ENCODE measurements at regions of chr16 and their contacts with region 1.

Region 1: DNA sequence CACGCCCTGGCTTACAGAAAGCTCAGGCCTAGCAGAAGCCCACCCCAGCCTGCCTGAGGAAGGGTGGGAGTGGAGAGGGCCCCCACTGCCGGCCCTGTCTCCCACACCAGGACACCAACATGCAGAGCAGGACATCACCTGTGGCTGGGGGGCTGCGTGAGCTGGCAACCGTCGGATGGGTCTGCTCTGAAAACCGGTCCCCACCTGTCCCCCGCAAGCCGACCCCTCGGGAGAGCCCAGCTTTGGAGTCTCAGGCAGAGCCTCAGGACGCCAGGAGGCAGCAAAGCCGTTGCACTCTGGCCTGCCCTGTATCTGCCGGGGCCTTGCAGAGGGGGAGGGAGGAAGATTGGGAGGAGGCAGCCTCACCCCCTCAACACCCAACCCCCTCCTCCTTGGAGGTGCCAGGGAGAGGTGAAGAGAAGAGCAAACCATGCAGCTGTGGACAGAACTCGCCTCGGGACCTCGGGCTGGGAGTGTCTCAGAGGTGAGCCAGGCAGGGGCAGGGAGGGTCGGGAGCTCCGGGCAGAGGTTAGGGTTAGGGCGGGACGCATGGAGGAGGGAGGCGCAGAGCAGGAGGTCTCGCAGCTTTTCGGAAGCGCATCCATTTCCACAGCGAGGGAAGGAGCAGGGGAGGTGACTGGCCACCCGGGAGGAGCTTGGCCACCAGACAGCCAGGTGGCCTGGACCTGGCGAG is 30.4 kb upstream of the ZC3H18 start:
- DNase-seq: no peak
- H3K4me3 Mint-ChIP-seq: no peak overlapping the region
- H3K27ac Mint-ChIP-seq: no peak overlapping the region
- H3K4me1 Mint-ChIP-seq: peaks cover 8% of the 10 kb centered on the region
- H3K27me3 Mint-ChIP-seq: peaks cover 4% of the 10 kb centered on the region

Region 2: DNA sequence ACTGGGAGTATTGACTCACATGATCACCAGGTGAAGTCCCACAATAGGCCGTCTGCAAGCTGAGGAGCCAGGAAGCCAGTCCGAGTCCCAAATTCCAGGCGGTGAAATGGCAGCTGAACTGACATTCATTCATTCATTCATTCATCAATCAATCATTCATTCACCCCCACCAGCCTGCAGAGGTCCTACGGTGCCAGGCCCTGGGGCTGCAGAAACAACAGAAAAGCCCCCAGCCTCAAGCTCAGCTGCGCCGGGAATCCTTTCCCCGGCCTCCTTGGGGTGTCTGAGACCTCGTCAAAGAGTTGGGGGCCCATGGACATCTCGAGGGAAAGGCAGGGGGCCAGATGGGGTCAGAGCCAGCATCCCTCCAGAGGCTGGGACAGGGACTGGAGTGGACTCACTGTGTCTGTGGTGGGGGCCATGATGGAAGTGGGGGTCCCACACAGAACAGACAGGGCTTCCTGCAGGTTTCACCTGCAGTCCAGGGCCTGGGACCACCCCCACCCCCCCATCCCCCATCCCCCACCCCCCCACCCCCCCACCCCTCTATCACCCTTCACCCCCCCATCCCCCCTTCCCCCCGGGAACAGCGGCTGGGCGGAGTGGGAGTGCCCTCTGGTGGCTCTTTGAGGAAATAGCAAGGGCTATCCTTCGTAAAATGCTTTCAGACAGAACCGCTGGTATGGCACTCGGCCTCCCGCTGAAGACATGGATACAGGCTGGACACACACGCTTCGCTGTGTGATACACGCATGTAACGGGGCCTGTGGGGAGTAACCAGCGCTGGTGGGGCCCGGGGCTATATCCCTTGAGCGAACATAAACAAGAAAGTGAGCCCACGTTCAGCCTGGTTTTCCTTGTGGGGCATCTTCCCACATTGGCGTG is 21.9 kb after region 1 on chr16:
- CTCF ChIA-PET with region 1: interaction called, 10 read pairs
- POLR2A ChIA-PET with region 1: no interaction called
- DNase-seq: peak; percentile 58
- H3K4me3 Mint-ChIP-seq: no peak overlapping the region
- H3K27ac Mint-ChIP-seq: no peak overlapping the region
- H3K4me1 Mint-ChIP-seq: peaks cover 10% of the 10 kb centered on the region
- H3K27me3 Mint-ChIP-seq: no peaks in the 10 kb centered on the region

Region 3: GRCh38 chr16:88662843-88663606 is 123.2 kb after region 1 on chr16 and contains the start of gene MVD:
- CTCF ChIA-PET with region 1: no interaction called
- POLR2A ChIA-PET with region 1: no interaction called
- DNase-seq: peak; percentile 98
- H3K4me3 Mint-ChIP-seq: peak within 1 kb of the TSS; percentile 93
- H3K27ac Mint-ChIP-seq: peak within 1 kb of the TSS; percentile 94
- H3K4me1 Mint-ChIP-seq: peaks cover 23% of the 10 kb centered on the region
- H3K27me3 Mint-ChIP-seq: no peaks in the 10 kb centered on the region
- total RNA-seq, gene MVD: 65.3 to 72.3 TPM

Region 4: DNA sequence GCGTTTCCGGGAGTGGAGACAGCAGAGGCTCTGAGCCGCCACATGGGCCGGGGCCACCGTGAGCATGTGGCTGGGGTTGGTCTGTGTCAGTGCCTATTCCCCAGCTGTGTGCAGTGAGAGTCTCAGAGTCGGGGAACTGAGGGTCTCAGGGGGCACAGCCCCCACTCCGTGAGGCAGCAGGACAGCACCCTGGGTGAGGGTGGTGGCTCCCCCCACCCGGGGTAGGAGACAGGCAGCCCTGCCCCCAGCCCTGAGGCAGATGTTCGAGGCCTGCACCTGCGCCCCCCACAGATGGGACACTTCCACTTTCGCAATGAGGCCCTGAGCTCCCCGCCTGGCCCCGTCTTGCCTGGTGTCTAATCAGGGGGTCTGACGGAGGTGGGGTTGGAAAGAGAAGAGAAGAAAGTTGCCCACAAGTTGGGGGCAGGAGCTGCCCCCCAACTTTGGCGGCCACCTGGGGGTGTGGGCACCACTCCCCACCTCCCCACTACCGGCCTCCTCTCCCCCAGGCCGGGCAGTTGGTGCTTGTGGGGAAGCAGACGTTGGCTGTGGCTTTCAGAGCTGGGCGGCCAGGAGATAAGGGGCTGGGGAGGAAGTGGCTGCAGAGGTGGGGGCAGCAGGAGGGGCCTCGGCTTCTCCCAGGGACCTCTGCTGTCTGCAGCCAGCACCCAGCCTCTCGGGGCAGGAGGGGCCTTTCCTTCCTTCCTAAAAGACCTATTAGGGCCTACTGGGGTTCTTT is 439.0 kb after region 1 on chr16:
- CTCF ChIA-PET with region 1: no interaction called
- POLR2A ChIA-PET with region 1: no interaction called
- DNase-seq: no peak
- H3K4me3 Mint-ChIP-seq: no peak overlapping the region
- H3K27ac Mint-ChIP-seq: no peak overlapping the region
- H3K4me1 Mint-ChIP-seq: no peaks in the 10 kb centered on the region
- H3K27me3 Mint-ChIP-seq: peaks cover 19% of the 10 kb centered on the region

Measured in activated CD4-positive, alpha-beta T cell treated with anti-CD3 and anti-CD28 coated beads, Interleukin-2, amount 10 ng/mL, durations not matched to agents 7 days and 5 days (primary cell).